HCT116 (cell line): ENCODE measurements at regions of chrX and their contacts with region 1.

Region 1: DNA sequence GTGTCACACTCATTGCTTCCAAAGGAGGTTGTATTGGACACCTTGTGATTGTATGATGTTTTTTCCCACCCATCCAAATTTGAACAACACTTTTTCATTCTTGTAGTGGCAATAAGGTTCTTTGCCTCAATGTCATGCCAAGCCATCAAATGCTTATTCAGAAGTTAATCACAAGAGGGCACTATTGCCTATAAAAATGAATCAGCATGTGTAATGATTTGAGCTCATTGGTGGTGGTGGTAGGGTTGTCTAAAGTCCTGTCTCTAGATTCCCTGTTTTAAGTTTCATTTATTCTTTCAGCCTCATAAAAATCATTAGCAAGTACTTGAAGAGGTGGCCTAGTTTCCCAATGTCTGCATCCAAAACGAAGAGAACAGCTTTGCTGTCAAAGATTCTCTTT is 37.0 kb downstream of the IRS4 start:
- DNase-seq: peak; percentile 16
- ATAC-seq: peak; percentile 59; the same call in 1 of the 2 replicates
- H3K4me3 ChIP-seq: no peak overlapping the region
- H3K27ac ChIP-seq: no peak overlapping the region
- H3K4me1 ChIP-seq: no peaks in the 10 kb centered on the region
- H3K27me3 ChIP-seq: no peaks in the 10 kb centered on the region
- CTCF ChIP-seq: peak in 2 of 3 experiments; percentile 27 to 51; a peak in 3 of 6 replicates
- POLR2A ChIP-seq: no peak
- RAD21 ChIP-seq: peak; percentile 54

Region 2: GRCh38 chrX:108671524-108671923 is 27.8 kb before region 1 on chrX:
- CTCF ChIA-PET with region 1: no interaction called
- POLR2A ChIA-PET with region 1: no interaction called
- RAD21 ChIA-PET with region 1: no interaction called
- intact Hi-C with region 1: no loop called
- DNase-seq: no peak
- ATAC-seq: no peak
- H3K4me3 ChIP-seq: no peak overlapping the region
- H3K27ac ChIP-seq: no peak overlapping the region
- H3K4me1 ChIP-seq: no peaks in the 10 kb centered on the region
- H3K27me3 ChIP-seq: no peaks in the 10 kb centered on the region
- CTCF ChIP-seq: no peak
- POLR2A ChIP-seq: no peak
- RAD21 ChIP-seq: no peak

Region 3: GRCh38 chrX:109475174-109475891 is 776.0 kb after region 1 on chrX:
- CTCF ChIA-PET with region 1: interaction called, 12 read pairs
- POLR2A ChIA-PET with region 1: no interaction called
- RAD21 ChIA-PET with region 1: no interaction called
- intact Hi-C with region 1: loop called (anchors 10 kb)
- DNase-seq: peak; percentile 54
- ATAC-seq: peak; percentile 87
- H3K4me3 ChIP-seq: peak overlapping the region; percentile 16 to 44; a peak in 3 of 4 replicates
- H3K27ac ChIP-seq: no peak overlapping the region
- H3K4me1 ChIP-seq: peaks cover 3 to 17% of the 10 kb centered on the region in 2 experiments; a peak in 2 of 4 replicates
- H3K27me3 ChIP-seq: no peaks in the 10 kb centered on the region
- CTCF ChIP-seq: peak; percentile 42 to 88 (median 49)
- POLR2A ChIP-seq: no peak
- RAD21 ChIP-seq: peak; percentile 51